ENCODE measurements at regions of chr4 and their contacts with region 1.

Region 1: GRCh38 chr4:42519803-42520417 is 122.6 kb downstream of the SHISA3 start:
- DNase-seq: peak; percentile 19
- ATAC-seq: peak; percentile 88
- H3K4me3 ChIP-seq: no peak overlapping the region
- H3K27ac ChIP-seq: no peak overlapping the region
- H3K4me1 ChIP-seq: peaks cover 9% of the 10 kb centered on the region
- H3K27me3 ChIP-seq: no peaks in the 10 kb centered on the region
- CTCF ChIP-seq: peak; percentile 41 to 59 (median 45); a peak in 5 of 6 replicates
- EP300 ChIP-seq: no peak
- POLR2A ChIP-seq: no peak
- RAD21 ChIP-seq: peak; percentile 82

Region 2: DNA sequence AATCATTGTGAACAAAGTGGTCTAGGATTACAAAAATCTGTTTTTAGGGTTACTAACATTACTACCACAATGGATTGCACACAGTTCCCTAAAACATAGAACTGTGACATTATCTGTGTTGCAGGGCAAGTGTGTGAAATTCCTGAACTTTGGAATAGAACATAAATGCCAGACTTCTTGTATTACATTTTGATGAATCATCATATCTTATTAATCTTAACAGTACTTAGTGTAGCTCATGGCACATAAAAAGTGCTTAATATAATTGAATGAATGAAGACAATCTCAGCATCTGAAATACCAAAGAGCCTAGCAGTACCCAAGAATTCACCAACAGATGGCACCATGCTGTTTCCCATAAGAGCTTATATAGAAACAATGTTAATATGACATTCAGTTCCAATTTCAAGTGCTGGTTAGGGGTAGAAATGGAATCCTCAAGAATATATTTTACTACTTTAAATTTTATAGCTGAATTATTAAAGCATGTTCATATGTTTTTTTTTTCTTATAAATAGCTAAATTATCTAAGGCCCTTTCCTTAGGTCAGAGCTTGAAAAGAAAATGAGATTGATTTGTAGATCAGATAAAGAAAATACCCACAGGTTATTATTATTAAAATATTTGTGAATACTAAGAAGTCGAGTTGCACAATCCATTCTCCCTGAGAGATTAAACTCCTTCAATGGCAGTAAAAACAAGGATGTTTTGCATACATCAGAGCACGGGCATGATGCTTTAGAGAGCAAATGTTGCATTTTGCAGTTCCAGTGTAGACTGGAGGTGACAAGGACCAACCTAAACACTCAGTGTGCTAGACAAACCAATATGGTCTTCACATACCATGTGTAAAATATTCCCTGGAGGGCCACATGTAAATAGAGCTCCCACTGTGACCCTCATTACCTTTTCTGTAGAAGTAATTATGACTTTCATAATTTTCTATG is 148.3 kb before region 1 on chr4:
- CTCF ChIA-PET with region 1: interaction called, 107 read pairs
- POLR2A ChIA-PET with region 1: no interaction called
- RAD21 ChIA-PET with region 1: interaction called, 56 read pairs
- SMC1A ChIA-PET with region 1: interaction called, 90 read pairs
- in situ Hi-C with region 1: no loop called
- intact Hi-C with region 1: loop called (anchors 1 kb)
- DNase-seq: no peak
- ATAC-seq: peak; percentile 82
- H3K4me3 ChIP-seq: no peak overlapping the region
- H3K27ac ChIP-seq: no peak overlapping the region
- H3K4me1 ChIP-seq: no peaks in the 10 kb centered on the region
- H3K27me3 ChIP-seq: no peaks in the 10 kb centered on the region
- CTCF ChIP-seq: peak; percentile 58 to 66 (median 64); a peak in 5 of 6 replicates
- EP300 ChIP-seq: no peak
- POLR2A ChIP-seq: no peak
- RAD21 ChIP-seq: peak; percentile 80

Region 3: DNA sequence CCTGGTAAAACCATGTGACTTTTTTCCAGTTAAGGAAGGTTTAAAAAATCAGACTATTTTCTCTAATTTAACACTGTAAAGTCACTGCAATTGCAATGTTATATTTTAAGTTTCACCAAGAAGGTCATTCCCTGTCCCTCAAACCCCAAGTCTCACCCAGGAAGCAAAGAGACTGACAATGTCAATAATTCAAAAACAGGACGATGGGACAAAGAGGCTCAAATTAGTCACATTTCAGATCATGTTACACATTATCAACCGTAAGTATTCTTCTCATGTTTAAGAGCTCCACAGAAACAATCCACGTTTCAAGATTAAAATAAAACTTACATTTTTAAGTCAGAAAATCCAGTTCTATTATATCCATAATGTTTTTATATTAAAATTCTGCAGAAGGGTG is 109.5 kb before region 1 on chr4:
- CTCF ChIA-PET with region 1: interaction called, 21 read pairs
- POLR2A ChIA-PET with region 1: no interaction called
- RAD21 ChIA-PET with region 1: no interaction called
- SMC1A ChIA-PET with region 1: no interaction called
- in situ Hi-C with region 1: no loop called
- intact Hi-C with region 1: no loop called
- DNase-seq: no peak
- ATAC-seq: no peak
- H3K4me3 ChIP-seq: no peak overlapping the region
- H3K27ac ChIP-seq: no peak overlapping the region
- H3K4me1 ChIP-seq: no peaks in the 10 kb centered on the region
- H3K27me3 ChIP-seq: no peaks in the 10 kb centered on the region
- CTCF ChIP-seq: no peak
- EP300 ChIP-seq: no peak
- POLR2A ChIP-seq: no peak
- RAD21 ChIP-seq: no peak

Region 4: GRCh38 chr4:42442601-42443000 is 77.3 kb before region 1 on chr4:
- CTCF ChIA-PET with region 1: interaction called, 8 read pairs
- POLR2A ChIA-PET with region 1: no interaction called
- RAD21 ChIA-PET with region 1: no interaction called
- SMC1A ChIA-PET with region 1: interaction called, 3 read pairs
- in situ Hi-C with region 1: no loop called
- intact Hi-C with region 1: loop called (anchors 5 kb)
- DNase-seq: no peak
- ATAC-seq: no peak
- H3K4me3 ChIP-seq: no peak overlapping the region
- H3K27ac ChIP-seq: no peak overlapping the region
- H3K4me1 ChIP-seq: no peaks in the 10 kb centered on the region
- H3K27me3 ChIP-seq: no peaks in the 10 kb centered on the region
- CTCF ChIP-seq: no peak
- EP300 ChIP-seq: no peak
- POLR2A ChIP-seq: no peak
- RAD21 ChIP-seq: no peak

Region 5: DNA sequence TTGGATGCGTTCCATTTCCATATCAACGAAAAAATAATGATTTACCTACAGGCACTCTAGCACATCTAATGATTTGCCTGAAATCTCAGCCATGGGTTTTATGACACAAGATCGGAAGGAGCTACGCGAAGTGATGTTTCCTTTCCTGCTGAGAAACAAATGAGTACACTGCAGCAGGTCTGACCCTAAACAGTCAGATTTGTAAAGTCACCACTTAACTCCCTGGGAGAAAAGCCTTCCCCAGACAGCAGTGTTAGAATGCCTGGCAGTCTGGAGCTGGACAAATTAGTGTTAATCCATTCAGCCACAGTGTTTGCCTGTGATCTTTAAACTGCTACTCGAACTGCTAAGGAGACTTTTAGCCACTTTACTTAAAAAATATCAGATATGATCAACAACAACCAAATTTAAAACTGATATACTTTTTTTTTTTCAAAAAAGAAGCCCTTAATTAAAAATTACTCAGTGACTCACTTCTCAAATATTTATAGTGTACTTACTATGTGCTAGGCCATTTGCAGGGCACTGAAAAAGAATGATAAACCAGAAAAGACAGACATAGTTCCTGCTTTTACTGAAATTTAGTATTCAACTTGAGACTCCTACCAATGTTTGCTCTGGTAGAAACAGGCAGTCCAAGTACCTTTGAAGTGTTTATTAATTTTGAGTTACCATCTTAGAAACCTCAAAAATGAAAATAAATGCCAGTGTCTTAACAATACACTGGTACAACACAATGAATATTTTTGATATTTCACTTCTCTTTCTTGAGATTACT is 18.1 kb before region 1 on chr4:
- CTCF ChIA-PET with region 1: interaction called, 12 read pairs
- POLR2A ChIA-PET with region 1: no interaction called
- RAD21 ChIA-PET with region 1: interaction called, 6 read pairs
- SMC1A ChIA-PET with region 1: interaction called, 9 read pairs
- in situ Hi-C with region 1: no loop called
- intact Hi-C with region 1: no loop called
- DNase-seq: no peak
- ATAC-seq: no peak
- H3K4me3 ChIP-seq: no peak overlapping the region
- H3K27ac ChIP-seq: no peak overlapping the region
- H3K4me1 ChIP-seq: no peaks in the 10 kb centered on the region
- H3K27me3 ChIP-seq: no peaks in the 10 kb centered on the region
- CTCF ChIP-seq: no peak
- EP300 ChIP-seq: no peak
- POLR2A ChIP-seq: no peak
- RAD21 ChIP-seq: no peak

Region 6: DNA sequence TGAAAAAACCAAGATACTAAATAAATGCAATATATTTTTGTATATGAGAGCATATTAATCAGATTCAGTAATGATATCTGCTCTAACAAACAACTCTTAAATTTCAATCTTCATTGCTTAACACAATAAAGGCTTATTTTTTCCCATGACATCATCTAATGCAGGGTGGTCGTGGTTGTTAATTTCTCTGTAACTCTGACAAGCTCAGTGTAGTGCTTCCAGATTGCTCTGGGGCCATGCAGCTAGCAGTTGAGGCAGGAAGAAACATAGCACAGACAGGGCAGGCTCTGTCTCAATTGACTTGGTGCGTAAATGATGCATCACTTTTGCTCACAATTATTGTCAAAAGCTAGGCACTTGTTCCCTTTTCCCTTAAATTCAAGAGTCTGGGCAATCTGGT is 371.7 kb after region 1 on chr4:
- CTCF ChIA-PET with region 1: no interaction called
- POLR2A ChIA-PET with region 1: no interaction called
- RAD21 ChIA-PET with region 1: no interaction called
- SMC1A ChIA-PET with region 1: no interaction called
- in situ Hi-C with region 1: no loop called
- intact Hi-C with region 1: no loop called
- DNase-seq: no peak
- ATAC-seq: no peak
- H3K4me3 ChIP-seq: no peak overlapping the region
- H3K27ac ChIP-seq: no peak overlapping the region
- H3K4me1 ChIP-seq: no peaks in the 10 kb centered on the region
- H3K27me3 ChIP-seq: no peaks in the 10 kb centered on the region; a peak in 1 of 4 replicates
- CTCF ChIP-seq: no peak
- EP300 ChIP-seq: no peak
- POLR2A ChIP-seq: no peak
- RAD21 ChIP-seq: no peak